ENCODE measurements at regions of chr15 and their contacts with region 1.

Region 1: GRCh38 chr15:30991255-30992072 is at the start of gene MTMR10:
- DNase-seq: peak; percentile 65
- H3K4me3 Mint-ChIP-seq: peak within 1 kb of the TSS; percentile 92
- H3K27ac Mint-ChIP-seq: peak within 1 kb of the TSS; percentile 77
- H3K4me1 Mint-ChIP-seq: peaks cover 30% of the 10 kb centered on the region
- H3K27me3 Mint-ChIP-seq: no peaks in the 10 kb centered on the region
- total RNA-seq, gene MTMR10: 9.7 to 10.5 TPM

Region 2: DNA sequence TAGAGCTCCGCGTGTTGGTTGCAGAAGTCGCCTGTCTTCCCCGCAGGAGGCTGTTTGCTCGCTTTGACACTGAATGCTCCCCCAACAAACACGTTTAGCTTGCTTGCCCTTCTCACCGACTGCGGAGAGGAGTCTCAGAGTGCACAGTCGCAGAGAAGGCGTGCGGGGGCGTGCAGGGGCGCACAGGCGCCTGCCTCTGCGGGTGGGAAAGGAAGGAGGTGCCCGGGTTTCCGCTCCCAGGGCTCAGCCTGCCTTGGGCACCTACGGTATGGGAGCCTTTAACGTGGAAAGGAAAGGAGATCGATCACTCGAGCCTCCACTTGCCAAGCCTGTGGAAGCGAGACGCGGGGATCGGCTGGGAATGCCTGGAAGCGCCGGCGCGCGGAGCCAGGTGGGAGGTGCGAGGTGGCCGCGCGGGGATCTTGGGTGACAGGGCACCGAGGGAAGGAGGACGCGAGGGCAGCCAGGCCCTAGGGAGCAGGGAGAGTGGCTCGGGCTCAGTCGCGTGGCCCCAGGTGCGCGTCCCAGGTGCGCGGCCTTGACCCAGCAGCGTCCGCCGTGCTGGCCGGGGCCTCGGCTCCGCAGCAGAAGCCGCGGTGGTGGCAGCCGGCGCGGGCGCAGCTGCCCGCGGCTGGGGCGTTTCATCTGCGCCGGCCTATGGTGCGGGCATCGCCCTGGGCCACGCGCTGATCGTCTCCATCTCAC is 87.8 kb before region 1 on chr15 and contains the start of gene FAN1:
- CTCF ChIA-PET with region 1: no interaction called
- intact Hi-C with region 1: loop called (anchors 1 kb)
- DNase-seq: peak; percentile 89
- H3K4me3 Mint-ChIP-seq: peak within 1 kb of the TSS; percentile 86
- H3K27ac Mint-ChIP-seq: peak within 1 kb of the TSS; percentile 74
- H3K4me1 Mint-ChIP-seq: peaks cover 30% of the 10 kb centered on the region
- H3K27me3 Mint-ChIP-seq: no peaks in the 10 kb centered on the region
- total RNA-seq, gene FAN1: 13.8 to 14.5 TPM

Region 3: DNA sequence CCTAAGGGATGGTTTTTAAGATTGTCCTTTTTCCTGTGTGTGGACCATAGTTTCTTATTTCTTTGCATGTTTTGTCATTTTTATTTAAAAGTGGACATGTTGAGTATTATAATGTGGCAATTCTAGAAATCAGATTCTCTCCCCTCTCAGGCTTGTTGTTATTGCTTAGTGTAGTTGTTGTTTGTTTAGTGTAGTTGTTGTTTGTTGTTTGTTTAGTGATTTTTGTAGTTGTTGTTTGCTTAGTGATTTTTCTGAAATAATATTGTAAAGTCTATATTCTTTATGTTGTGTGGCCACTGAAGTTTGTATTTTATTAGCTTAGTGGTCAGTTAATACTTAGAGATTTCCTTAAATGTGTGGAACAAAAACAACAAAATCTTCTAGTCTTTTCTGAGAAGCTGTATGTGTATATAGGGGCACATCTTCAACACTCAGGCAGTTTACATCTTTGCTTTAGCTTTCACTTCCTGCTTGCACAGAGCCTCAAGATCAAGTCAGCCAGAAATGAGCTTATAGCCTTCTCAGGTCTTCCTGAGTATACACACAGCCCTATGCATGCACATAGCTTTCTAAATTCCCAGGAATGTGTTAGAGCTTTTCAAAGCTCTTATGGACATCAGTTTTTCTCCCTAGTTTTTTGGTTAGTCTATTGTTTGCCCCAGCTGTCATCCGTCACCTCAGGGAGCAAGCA is 22.2 kb after region 1 on chr15:
- CTCF ChIA-PET with region 1: interaction called, 3 read pairs
- intact Hi-C with region 1: loop called (anchors 2 kb)
- DNase-seq: no peak
- H3K4me3 Mint-ChIP-seq: no peak overlapping the region
- H3K27ac Mint-ChIP-seq: peak overlapping the region; percentile 9
- H3K4me1 Mint-ChIP-seq: peaks cover 19% of the 10 kb centered on the region
- H3K27me3 Mint-ChIP-seq: no peaks in the 10 kb centered on the region